ENCODE measurements at regions of chr15 and their contacts with region 1.

Region 1: DNA sequence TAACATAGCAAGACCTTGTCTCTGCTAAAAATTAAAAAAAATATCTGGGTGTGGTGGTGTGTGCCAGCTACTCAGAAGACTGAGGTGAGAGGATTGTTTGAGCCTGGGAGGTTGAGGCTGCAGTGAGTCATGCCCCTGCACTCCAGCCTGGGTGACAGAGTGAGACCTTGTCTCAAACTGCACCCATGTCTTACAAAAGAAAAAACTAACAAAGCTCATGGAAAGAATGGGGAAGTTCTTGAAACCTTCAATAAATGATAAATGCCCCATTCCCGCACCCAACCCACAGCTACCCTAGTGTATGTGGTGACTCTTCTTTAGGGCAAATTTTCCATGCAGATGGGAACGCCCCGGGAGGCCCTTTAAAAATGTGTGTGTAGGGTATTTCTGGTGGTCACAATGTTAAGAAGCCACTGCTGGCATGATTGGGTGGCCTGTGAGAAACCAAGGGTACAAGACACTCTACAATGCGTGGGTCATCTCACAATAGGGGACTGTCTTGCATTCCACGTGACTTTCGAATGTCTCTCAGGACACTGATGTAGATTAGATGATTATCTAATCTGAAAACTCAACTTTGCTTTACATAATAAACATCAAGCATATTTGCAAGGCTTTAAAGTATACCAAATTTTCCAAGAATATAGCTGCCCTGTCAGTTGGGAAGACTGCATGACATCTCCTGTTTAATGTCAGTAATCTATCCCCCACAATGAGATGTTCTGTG is 28.5 kb downstream of the RPLP1 start:
- DNase-seq: peak; percentile 76 to 95
- H3K4me3 ChIP-seq: no peak overlapping the region
- H3K27ac ChIP-seq: peak overlapping the region; percentile 70
- H3K4me1 ChIP-seq: peaks cover 43% of the 10 kb centered on the region
- H3K27me3 ChIP-seq: no peaks in the 10 kb centered on the region
- CTCF ChIP-seq: no peak

Region 2: DNA sequence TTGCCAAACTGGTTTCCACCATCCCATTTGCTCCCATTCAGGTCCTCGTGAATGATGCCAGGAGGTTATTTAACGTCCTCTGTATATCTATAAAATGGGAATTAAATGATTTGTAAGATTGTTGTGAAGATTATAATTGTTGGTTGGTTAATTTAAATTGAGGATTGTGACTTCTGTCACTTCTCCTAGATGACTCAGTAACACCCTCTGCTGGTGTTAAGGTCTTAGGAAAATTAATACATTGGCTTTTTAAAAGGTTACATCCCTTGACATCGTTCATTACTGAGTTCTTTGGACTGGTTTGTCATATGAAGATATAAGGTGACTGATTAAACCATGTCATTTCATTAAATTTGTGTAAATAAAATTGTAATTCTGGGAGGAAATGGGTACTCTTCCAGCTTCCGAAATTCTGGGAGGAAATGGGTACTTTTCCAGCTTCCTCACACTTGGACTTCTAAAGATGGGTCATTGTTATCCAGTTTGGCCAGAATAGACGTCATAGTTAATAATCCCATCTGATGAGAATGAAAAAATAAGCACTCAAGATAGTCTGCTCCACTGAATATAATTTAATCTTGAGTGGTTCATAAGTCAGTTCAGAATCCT is 215.6 kb before region 1 on chr15:
- CTCF ChIA-PET with region 1: no interaction called
- POLR2A ChIA-PET with region 1: no interaction called
- intact Hi-C with region 1: no loop called
- DNase-seq: no peak
- H3K4me3 ChIP-seq: no peak overlapping the region
- H3K27ac ChIP-seq: no peak overlapping the region
- H3K4me1 ChIP-seq: no peaks in the 10 kb centered on the region
- H3K27me3 ChIP-seq: no peaks in the 10 kb centered on the region
- CTCF ChIP-seq: peak; percentile 66

Region 3: GRCh38 chr15:69557340-69558137 is 76.4 kb after region 1 on chr15:
- CTCF ChIA-PET with region 1: interaction called, 20 read pairs
- POLR2A ChIA-PET with region 1: interaction called, 10 read pairs
- intact Hi-C with region 1: loop called (anchors 5 kb)
- DNase-seq: peak; percentile 67 to 95
- H3K4me3 ChIP-seq: no peak overlapping the region
- H3K27ac ChIP-seq: peak overlapping the region; percentile 63
- H3K4me1 ChIP-seq: peaks cover 54% of the 10 kb centered on the region
- H3K27me3 ChIP-seq: no peaks in the 10 kb centered on the region
- CTCF ChIP-seq: no peak

Measured in PC-9 (cell line).